ENCODE measurements at regions of chr4 and their contacts with region 1.

Region 1: GRCh38 chr4:8241895-8242696 is 27.5 kb upstream of the HTRA3 start:
- H3K4me3 ChIP-seq: no peak overlapping the region
- H3K27ac ChIP-seq: no peak overlapping the region
- H3K4me1 ChIP-seq: no peaks in the 10 kb centered on the region
- CTCF ChIP-seq: peak; percentile 70

Region 2: GRCh38 chr4:8403173-8403753 is 161.2 kb after region 1 on chr4:
- CTCF ChIA-PET with region 1: interaction called, 34 read pairs
- POLR2A ChIA-PET with region 1: no interaction called
- H3K4me3 ChIP-seq: no peak overlapping the region
- H3K27ac ChIP-seq: no peak overlapping the region
- H3K4me1 ChIP-seq: no peaks in the 10 kb centered on the region
- CTCF ChIP-seq: peak; percentile 50

Region 3: DNA sequence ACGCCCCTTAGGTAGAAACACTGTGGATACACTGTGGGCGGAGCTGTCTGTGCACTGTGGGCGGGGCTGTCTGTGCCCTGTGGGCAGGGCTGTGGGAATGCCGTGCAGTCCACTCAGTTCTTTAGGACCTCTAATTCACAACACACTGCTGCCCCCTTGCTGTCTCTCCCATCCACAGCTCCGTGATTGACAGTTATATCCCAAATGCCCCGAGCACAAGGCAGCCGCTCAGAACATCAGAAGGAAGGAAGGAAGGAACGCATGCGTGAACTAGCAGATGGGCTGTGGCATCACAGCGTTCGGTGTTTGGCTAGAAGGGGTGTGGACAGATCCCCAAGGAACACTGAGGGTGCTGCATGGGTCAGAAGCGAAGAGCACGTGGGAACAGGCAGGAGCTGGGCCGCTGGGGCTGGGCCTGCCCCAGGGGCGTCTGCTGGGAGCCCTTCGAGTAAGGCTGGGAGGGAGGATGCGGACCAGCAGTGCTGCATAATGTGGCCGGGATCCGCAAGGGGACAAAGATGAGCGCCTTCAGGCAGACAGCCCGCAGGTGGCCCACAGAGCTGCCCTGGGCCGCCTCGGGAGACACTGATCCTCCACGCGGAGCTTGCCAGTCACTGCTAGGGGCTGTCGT is 168.7 kb after region 1 on chr4:
- CTCF ChIA-PET with region 1: interaction called, 23 read pairs
- POLR2A ChIA-PET with region 1: no interaction called
- H3K4me3 ChIP-seq: no peak overlapping the region
- H3K27ac ChIP-seq: no peak overlapping the region
- H3K4me1 ChIP-seq: 0 out of 2 replicates have a peak, but pooled peaks cover 2% of the 10 kb centered on the region
- CTCF ChIP-seq: peak; percentile 26

Region 4: DNA sequence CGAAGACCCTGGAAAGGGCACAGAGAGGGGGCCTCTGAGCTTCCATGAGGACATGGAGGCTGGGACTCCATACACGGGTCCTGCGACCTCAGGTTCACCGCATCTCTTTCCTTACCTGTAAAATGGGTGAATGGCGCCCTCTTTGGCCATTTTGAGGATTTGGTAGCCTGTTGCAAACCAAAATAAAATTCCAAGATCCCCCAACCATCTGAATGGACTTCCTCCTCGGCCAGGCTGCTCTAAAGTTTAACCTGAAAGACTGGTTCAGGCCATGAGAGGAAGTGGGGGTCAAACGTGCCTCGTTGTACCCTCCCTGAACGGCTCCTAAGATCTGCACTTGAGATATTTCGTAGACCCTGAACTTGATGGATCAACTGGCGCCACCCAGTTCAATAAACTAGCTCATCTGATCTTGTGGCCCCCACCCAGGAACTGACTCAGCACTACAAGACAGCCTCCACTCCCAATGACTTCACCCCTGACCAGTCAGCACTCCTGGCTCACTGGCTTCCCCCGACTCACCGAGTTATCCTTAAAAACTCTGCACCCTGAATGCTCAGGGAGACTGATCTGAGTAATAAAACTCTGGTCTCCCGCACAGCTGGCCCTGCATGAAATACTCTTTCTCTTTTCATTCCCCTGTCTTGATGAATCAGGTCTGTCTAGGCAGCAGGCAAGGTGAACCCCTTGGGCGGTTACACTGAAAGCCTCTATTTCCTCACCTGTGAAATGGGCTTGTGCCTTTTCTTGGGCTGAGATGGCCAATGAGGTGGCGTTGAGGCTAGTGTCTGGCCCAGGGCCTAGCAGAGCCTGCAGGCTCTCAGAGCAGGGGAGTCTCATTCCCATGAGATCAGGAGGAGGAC is 305.2 kb after region 1 on chr4:
- CTCF ChIA-PET with region 1: no interaction called
- POLR2A ChIA-PET with region 1: no interaction called
- H3K4me3 ChIP-seq: no peak overlapping the region
- H3K27ac ChIP-seq: no peak overlapping the region
- H3K4me1 ChIP-seq: no peaks in the 10 kb centered on the region
- CTCF ChIP-seq: no peak

Measured in HEK293 (cell line).